PC-9 (cell line): ENCODE measurements at regions of chr12 and their contacts with region 1.

Region 1: DNA sequence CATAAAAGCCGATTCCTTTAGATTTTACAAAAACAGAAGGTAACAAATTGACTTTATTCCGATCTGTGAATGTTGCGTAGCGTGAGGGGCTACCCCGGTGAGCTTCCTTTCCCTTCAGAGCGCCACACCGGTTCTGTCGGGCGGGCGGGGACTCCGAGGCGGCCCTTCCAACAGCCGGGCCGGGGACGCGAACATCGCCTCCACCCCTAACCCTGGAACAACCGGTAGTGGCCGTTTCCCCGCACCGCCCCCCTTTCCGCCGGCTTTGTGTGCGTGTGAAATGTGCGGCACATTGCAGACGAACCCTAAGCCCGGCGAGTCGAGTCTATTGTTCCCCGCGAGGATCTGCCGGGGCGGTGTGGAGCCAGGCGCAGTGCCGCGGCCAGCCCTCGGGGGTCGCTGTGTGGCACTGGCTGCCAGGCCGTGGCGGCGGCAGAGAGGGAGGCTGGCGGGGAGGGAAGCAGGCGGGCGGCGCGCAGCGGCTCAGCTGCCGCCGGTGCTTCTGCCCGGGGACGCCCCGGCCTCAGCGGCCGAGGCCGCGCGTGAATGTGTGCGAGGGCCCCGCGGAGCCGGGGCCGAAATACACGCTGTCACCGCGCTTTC is 775 bp upstream of the ARID2 start:
- DNase-seq: peak; percentile 81 to 96
- H3K4me3 ChIP-seq: peak overlapping the region; percentile 98
- H3K27ac ChIP-seq: peak overlapping the region; percentile 91
- H3K4me1 ChIP-seq: peaks cover 42% of the 10 kb centered on the region
- H3K27me3 ChIP-seq: no peaks in the 10 kb centered on the region
- CTCF ChIP-seq: peak; percentile 83

Region 2: DNA sequence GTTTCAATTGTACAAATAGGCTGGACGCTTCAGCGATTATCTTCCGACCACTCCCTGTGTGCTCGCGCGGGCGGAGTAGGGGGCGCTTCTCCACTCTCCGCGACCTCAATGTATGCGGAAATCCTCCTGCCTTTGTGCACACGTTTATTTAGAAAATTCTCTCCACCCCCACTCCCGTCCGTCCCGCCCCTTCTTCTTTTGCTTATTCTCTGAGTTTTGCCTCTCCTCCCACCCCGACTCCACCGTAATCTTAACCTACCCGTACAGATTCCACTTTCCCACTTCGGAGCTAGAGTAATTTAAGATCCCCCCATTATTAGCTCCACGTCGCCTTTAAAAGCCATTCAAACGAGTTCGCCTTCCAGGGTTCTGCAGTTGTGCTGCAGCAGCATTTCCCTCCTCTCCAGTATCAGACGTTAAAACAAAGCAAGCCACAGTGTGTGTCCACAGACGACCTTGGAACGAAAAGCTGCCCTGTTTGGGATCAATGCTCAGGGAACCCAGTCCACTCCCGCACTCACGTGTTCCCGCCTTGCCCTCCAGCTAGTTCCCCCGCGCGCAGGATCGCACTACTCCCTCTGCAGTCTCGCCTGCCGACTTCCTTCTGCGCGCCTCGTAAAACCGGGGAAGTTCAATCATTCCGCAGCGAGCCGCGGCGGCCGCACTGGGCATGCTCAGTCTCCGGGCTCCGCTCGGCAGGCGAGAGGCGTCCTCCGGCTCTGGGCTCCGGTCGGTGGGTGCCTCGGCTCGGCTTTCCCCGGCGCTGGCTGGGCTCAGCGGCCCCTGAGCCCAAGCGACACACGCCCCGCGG is 513.1 kb before region 1 on chr12 and contains the start of gene ANO6:
- CTCF ChIA-PET with region 1: no interaction called
- POLR2A ChIA-PET with region 1: no interaction called
- intact Hi-C with region 1: loop called (anchors 5 kb)
- DNase-seq: peak; percentile 76 to 80
- H3K4me3 ChIP-seq: peak within 1 kb of the TSS; percentile 86
- H3K27ac ChIP-seq: peak within 1 kb of the TSS; percentile 93
- H3K4me1 ChIP-seq: peaks cover 38% of the 10 kb centered on the region
- H3K27me3 ChIP-seq: no peaks in the 10 kb centered on the region
- CTCF ChIP-seq: peak; percentile 55
- total RNA-seq, gene ANO6: 46.1 and 51.4 TPM in 2 replicates

Region 3: GRCh38 chr12:45268672-45269411 is 459.9 kb before region 1 on chr12:
- CTCF ChIA-PET with region 1: no interaction called
- POLR2A ChIA-PET with region 1: no interaction called
- intact Hi-C with region 1: loop called (anchors 5 kb)
- DNase-seq: peak; percentile 77 to 91
- H3K4me3 ChIP-seq: peak overlapping the region; percentile 30; the same call in 1 of the 2 replicates
- H3K27ac ChIP-seq: peak overlapping the region; percentile 94
- H3K4me1 ChIP-seq: peaks cover 67% of the 10 kb centered on the region
- H3K27me3 ChIP-seq: no peaks in the 10 kb centered on the region
- CTCF ChIP-seq: peak; percentile 70

Region 4: DNA sequence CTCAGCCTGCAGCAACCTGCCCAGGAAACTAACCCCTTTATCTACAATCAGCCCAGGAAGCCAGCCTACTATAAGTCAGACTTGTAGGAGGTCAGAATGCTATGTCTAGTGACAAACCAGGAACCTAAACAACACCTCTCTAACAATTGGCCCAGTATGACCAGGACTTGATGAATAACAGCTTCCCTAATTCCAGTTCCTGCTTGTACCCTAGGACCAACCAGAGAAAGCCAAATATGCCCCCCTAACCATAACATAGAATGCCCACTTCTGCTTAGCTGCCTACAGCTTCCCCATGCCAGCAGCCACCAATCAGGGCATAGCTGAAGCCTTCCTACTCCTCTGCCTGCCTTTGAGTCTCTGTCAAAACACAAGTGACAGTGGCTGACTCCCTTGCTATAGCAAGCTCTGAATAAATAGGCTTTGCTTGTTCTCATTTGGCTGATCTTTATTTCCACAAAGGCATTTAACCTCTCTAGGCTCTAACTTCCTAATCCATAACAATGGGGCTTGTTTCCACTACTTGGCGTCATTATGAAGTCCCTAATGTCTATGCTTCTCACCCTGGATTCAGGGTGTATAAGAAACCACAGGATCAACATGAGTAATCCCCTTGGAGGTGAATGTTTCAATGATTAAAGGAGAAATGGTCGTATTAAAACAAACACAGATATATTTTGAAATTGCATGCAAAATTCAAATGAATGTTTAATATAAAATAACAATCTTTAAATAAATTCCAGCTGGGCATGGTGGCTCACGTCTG is 292.6 kb before region 1 on chr12:
- CTCF ChIA-PET with region 1: no interaction called
- POLR2A ChIA-PET with region 1: interaction called, 7 read pairs
- intact Hi-C with region 1: loop called (anchors 1 kb)
- DNase-seq: no peak
- H3K4me3 ChIP-seq: no peak overlapping the region
- H3K27ac ChIP-seq: no peak overlapping the region
- H3K4me1 ChIP-seq: peaks cover 18% of the 10 kb centered on the region
- H3K27me3 ChIP-seq: no peaks in the 10 kb centered on the region
- CTCF ChIP-seq: no peak

Region 5: DNA sequence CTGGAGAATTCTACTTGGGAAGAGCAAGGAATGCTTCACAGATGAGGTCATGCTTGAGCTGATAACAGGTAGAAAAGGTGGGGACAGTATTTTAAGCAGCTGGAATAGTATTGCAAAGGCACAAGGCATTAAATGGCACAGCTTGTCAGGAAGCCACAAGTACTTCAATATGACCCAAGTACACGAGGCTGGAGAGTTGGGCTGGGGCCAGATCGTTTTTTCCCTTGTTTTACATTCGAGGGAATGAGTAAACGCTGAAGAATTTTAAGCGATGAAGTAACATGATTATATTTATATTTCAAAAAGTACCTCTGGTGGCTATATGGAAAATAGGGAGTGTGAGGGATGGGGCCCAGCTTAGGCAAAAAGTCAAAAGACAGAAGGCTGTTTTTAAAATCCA is 54.1 kb before region 1 on chr12:
- CTCF ChIA-PET with region 1: no interaction called
- POLR2A ChIA-PET with region 1: no interaction called
- intact Hi-C with region 1: loop called (anchors 1 kb)
- DNase-seq: peak; percentile 80 to 90
- H3K4me3 ChIP-seq: no peak overlapping the region
- H3K27ac ChIP-seq: peak overlapping the region; percentile 6; the same call in 1 of the 2 replicates
- H3K4me1 ChIP-seq: peaks cover 21% of the 10 kb centered on the region
- H3K27me3 ChIP-seq: no peaks in the 10 kb centered on the region
- CTCF ChIP-seq: no peak